HepG2 (cell line): ENCODE measurements at regions of chr6 and their contacts with region 1.

Region 1: DNA sequence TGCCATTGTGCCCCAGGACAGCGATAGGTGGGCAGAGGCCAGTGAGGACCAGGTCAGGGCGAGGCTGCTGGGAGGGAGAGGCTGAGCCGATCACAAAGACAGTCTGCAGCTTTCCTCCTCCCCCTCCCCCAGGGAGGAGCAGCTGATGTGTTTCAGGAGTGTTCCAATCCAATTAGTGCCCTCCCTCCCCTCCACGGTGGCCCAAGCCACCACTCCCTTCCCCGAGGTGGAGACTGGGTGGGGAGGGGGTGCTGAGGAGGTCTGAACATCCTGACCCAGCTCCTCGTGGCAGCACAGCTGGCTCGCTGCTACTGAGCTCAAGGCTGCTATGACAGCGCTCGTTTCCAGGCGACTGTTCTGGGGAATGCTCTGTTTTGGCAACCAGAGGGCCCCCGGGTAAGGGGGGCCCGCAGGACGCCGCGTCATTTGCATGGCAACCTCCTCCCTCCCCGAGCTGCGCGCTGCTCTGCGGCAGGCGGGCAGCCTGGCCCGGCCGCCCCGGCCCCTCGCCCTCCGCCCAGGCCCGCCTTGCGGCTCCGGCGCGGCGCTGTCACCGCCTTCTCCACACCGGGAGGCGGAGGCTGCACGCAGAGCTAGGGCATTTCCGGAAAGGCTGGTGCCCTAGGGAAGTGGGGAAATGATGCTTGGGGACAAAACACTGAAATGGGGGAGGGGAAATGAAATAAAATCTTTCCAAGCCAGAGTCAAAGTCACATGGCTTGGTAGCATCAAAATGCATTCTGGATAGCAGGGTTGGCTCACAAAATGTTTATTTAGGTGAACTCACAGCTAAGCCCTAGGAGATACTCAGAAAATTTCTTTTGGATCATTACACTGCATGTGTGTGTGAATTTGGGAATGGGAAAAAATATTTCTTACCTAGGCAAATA is 67.4 kb upstream of the PIM1 start:
- DNase-seq: peak; percentile 92
- ATAC-seq: peak; percentile 82
- H3K4me3 ChIP-seq: peak overlapping the region; percentile 19 to 69 (median 54)
- H3K27ac ChIP-seq: peak overlapping the region; percentile 89
- H3K4me1 ChIP-seq: peaks cover 87% of the 10 kb centered on the region
- H3K27me3 ChIP-seq: no peaks in the 10 kb centered on the region
- CTCF ChIP-seq: peak; percentile 38; the same call in 1 of the 2 replicates
- EP300 ChIP-seq: peak; percentile 50 to 95; a peak in 3 of 4 replicates
- POLR2A ChIP-seq: peak; percentile 43 to 69; a peak in 2 of 4 replicates
- RAD21 ChIP-seq: peak; percentile 81

Region 2: DNA sequence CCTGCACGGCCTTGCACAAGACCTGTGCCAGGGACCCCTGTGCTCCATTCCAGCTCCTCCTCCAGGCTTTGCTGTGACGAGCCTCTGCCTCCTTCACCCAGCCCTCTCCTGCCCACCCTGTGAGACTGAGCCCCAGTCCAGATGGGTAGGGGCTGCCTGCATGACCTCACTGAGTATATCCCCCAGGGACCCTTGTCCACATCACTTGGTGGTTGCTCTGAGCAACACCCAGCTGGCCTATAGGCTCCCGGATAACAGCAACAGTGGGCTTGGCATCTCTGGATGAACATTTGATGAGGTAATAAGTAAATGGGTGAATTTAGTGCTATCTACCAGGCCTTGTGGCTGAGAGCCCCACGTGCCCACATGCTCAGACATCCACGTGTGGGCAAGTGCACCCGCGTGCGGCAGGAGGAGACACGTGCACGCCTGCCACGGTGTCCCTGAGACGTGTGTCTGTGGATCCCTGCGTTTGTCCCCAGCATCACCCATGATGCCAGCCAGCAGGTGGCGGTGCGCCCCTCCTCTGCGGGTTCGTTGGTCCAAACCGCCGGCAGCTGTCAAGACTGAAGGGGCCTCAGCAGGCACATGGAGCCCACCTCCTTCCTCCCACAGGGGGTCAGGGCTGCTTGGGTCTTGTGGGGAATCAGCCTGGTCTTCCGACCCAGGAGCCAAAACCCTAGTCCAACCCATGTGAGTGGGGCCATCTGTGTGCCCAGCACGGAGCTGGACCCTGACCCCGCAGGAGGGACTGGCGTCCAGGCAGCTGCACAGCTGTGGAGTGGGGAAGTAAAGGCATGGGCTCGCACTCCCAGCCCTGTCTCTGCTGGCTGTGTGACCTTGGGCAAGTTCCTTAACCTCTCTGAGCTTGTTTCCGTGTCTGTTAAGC is 51.1 kb before region 1 on chr6:
- CTCF ChIA-PET with region 1: no interaction called
- POLR2A ChIA-PET with region 1: interaction called, 12 read pairs
- in situ Hi-C with region 1: loop called (anchors 5 kb)
- intact Hi-C with region 1: no loop called
- DNase-seq: peak; percentile 70
- ATAC-seq: peak; percentile 82
- H3K4me3 ChIP-seq: peak overlapping the region in 2 of 3 experiments; percentile 12 to 64; a peak in 3 of 6 replicates
- H3K27ac ChIP-seq: no peak overlapping the region
- H3K4me1 ChIP-seq: peaks cover 78% of the 10 kb centered on the region
- H3K27me3 ChIP-seq: peaks cover 2 to 17% of the 10 kb centered on the region in 2 experiments; a peak in 4 of 5 replicates
- CTCF ChIP-seq: peak; percentile 100
- EP300 ChIP-seq: no peak
- POLR2A ChIP-seq: no peak
- RAD21 ChIP-seq: peak; percentile 100

Region 3: DNA sequence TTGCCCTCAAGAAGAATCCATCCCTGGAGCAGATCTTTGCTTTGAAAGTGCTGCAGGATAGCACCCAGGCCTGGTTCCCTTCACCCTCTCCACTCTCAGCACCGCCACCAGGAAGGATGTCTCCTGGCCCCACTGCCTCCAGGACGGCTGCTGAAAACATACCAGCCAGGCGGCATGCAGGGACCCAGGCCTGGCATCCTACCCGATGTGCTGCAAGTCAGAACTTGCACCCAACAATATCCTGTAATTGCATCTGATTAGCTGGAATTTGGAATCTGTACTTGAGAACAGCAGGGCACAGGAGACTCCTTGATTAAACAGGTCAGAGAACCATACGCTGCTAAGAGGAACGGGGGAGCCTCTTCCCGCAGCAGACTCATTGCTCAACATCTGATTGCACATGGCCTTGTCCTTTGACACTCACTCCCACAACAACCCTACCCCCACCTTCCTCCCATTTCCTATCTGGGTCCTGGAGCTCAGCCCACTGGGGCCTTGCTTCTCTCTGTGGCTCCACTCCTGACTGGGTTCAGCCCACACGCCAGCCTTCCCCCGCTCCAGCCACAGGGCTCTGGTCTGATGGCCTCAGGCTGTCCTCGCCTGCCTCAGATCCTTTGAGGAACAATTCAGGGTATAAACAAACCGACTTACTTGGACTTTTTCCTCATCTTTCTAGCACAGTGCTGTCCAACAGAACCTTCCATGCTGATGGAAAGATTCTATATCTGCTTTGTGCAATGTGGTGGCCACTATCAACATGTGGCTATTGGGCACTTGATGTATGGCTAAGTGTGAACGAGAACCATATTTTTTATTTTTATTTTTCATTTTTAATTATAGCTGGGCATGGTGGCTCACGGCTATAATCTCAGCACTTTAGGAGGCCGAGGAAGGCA is 19.0 kb before region 1 on chr6:
- CTCF ChIA-PET with region 1: no interaction called
- POLR2A ChIA-PET with region 1: interaction called, 73 read pairs
- in situ Hi-C with region 1: no loop called
- intact Hi-C with region 1: no loop called
- DNase-seq: peak; percentile 96
- ATAC-seq: peak; percentile 96
- H3K4me3 ChIP-seq: peak overlapping the region; percentile 3 to 57 (median 15); a peak in 2 of 6 replicates
- H3K27ac ChIP-seq: peak overlapping the region; percentile 74
- H3K4me1 ChIP-seq: peaks cover 76% of the 10 kb centered on the region
- H3K27me3 ChIP-seq: no peaks in the 10 kb centered on the region
- CTCF ChIP-seq: peak; percentile 49
- EP300 ChIP-seq: peak; percentile 95 to 98
- POLR2A ChIP-seq: peak; percentile 33 to 50; a peak in 1 of 4 replicates
- RAD21 ChIP-seq: peak; percentile 66

Region 4: DNA sequence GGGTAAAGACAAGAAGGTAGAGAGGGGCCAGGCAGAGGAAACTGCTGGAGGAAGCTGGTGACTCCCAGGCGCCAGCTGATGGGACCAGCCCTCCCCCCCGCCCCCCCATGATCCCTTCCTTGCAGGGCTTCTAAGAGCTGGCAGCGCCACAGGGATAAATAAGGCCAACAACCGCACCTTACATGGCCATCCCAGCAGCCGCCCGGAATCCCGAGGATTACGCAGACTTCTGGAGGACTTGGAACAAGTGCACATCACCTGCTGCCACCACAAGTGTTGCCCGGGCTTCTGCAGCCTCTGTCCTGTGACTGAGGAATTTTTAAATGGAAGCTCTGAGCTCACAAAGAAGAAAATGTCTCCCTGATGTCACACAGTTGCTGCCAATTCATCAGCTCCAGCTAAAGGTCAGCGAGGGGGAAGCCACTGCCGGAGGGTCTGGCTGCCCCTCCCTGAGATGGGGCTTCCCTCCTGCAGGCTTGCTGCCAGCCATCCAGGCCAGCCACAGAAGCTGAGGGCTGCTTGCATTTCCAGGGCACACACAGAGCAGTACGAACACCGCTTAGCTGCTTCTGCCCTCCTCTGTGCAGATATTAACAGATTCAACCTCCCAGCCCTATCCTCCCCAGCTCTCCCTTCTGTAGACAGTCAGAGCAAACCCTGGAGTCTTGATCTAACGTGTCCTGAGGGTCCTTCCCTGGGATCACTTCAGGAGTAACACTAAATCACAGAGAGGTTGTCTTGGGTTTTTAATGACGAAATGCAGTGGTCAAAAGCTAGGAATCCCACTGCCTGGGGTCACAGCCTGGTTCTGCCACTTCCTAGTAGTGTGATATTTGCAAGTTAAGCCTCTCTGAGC is 28.8 kb after region 1 on chr6:
- CTCF ChIA-PET with region 1: no interaction called
- POLR2A ChIA-PET with region 1: interaction called, 127 read pairs
- in situ Hi-C with region 1: no loop called
- intact Hi-C with region 1: loop called (anchors 1 kb)
- DNase-seq: peak; percentile 68
- ATAC-seq: peak; percentile 57
- H3K4me3 ChIP-seq: peak overlapping the region; percentile 39 to 68 (median 52)
- H3K27ac ChIP-seq: peak overlapping the region; percentile 95
- H3K4me1 ChIP-seq: peaks cover 90% of the 10 kb centered on the region
- H3K27me3 ChIP-seq: no peaks in the 10 kb centered on the region
- CTCF ChIP-seq: peak; percentile 42; the same call in 1 of the 2 replicates
- EP300 ChIP-seq: no peak
- POLR2A ChIP-seq: peak in 1 of 2 experiments; percentile 15; a peak in 1 of 4 replicates
- RAD21 ChIP-seq: peak; percentile 38

Region 5: DNA sequence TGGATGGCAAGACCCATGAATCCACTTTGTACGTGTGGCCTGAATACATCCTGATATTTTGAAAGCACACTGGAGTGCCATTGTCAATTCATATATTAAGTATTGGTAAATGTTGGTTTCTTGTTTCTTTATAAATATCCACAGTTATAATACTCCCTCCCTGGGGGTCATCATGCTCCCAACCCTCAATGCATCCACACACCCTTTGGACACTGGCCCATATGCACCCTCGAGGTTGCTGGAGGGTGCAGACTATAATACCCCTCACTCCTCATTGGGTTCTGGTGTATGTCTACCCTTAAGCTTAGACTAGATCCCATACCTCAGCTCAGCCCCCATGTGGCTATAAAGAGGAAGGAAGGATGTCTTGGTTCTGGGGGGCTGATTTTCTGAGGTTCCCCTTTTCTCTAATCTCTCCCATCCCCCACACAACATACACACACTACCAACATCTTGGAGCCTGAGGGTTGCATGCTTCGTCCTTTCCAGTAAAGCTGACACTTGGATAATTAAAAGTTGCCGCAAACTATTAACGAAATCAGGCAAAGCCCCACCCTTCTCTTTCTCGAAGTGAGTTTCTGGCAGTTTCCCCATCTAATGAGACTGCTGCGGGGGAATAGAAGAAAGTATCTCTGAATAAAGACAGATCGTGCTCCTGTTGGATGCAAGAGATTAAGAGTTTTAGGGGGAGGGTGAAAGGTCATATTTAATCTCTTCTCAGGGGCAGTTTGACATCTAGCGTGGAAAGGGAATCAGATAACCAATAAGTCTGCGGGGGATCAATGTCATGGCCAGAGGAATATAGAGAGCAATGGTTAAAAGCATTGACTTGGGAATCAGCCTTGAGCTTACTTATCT is 74.8 kb after region 1 on chr6:
- CTCF ChIA-PET with region 1: no interaction called
- POLR2A ChIA-PET with region 1: interaction called, 132 read pairs
- in situ Hi-C with region 1: no loop called
- intact Hi-C with region 1: loop called (anchors 1 kb)
- DNase-seq: no peak
- ATAC-seq: peak; percentile 73
- H3K4me3 ChIP-seq: no peak overlapping the region
- H3K27ac ChIP-seq: no peak overlapping the region
- H3K4me1 ChIP-seq: peaks cover 24% of the 10 kb centered on the region
- H3K27me3 ChIP-seq: no peaks in the 10 kb centered on the region; a peak in 1 of 5 replicates
- CTCF ChIP-seq: peak; percentile 41
- EP300 ChIP-seq: no peak
- POLR2A ChIP-seq: no peak
- RAD21 ChIP-seq: no peak